GM13976 (cell line): ENCODE measurements at regions of chr5 and their contacts with region 1.

Region 1: GRCh38 chr5:159156426-159157238 is 52.7 kb downstream of the RNF145 start:
- DNase-seq: peak; percentile 57
- CTCF ChIP-seq: peak; percentile 79

Region 2: GRCh38 chr5:158910782-158911692 is 245.6 kb before region 1 on chr5:
- in situ Hi-C with region 1: no loop called
- DNase-seq: no peak
- CTCF ChIP-seq: no peak

Region 3: DNA sequence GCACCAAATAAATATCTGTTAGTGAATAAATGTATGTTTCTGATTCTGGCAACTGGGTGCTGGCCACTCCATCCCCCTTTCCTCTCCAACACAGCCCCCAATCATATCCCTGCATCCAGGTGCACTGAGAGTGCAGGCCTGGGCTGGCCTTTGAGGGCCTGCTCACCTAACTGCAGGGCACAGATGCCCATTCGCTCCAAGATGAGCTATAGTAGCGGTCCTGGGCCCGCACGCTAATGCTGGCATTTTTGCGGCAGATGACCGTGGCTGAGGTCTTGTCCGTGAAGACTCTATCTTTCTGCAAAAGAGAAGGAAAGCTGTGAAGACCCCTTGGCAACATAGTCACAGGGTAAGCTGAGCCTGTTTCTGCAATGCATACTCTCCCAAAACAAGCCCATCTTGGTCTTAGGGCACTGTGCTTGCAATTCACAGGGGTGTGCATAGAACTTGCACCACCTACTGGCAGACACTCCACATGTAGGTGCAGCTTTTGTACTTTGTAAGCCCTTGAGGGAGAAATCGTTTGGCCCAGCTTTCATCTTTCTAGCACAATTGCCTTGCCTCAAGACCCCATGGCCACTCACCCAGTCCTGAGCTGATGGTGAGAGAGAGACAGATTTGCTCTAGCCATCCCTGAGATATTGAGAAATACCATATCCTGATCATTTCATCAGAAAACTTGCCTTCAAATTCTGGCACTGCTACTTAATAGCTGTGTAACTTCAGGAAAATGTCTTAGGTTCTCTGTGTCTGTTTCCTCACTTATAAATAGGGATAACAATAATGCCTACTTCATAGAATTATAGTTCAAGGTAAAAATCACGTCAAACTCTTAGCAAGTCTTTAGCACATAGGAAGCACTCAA is 160.1 kb after region 1 on chr5:
- in situ Hi-C with region 1: loop called (anchors 5 kb)
- DNase-seq: peak; percentile 51
- CTCF ChIP-seq: peak; percentile 61

Region 4: DNA sequence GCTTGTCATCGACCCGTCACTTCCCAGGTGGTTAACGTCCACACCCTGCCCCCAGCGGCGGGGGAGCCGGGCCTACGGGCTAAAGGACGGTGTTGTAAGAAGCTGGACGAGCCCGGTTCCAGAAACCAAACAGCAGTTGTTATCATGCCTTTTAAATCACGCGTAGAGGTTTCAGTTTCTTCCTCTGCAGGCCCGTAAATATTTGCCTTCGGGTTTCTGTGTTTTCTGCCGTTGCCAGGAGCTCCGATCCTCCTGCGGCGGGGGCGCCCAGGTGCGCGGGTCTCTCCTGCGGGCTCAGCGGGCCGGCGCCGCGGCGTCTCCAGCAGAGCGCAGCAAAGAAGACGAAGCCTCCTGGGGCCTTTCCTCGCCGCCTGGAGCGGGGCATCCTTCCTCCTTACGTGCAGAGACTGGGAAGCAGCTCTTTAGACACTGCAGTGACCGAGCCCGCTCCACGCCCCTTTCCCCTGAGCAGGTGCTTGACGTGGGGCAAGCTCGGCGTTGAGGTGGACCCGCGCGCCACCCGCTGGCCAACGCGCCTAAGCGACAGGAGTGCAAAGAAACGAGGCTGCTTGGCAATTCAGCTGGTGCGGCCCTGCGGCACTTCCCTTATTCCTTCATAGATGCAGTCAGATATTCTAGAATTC is 830.5 kb after region 1 on chr5:
- in situ Hi-C with region 1: loop called (anchors 25 kb)
- DNase-seq: peak; percentile 89
- CTCF ChIP-seq: peak; percentile 76